Calu3 (cell line): ENCODE measurements at regions of chr2 and their contacts with region 1.

Region 1: GRCh38 chr2:156892467-156893281 is 364.8 kb upstream of the GALNT5 start:
- DNase-seq: peak; percentile 23
- H3K4me3 Mint-ChIP-seq: peak overlapping the region; percentile 67
- H3K27ac Mint-ChIP-seq: peak overlapping the region; percentile 29
- H3K4me1 Mint-ChIP-seq: peaks cover 20% of the 10 kb centered on the region
- H3K27me3 Mint-ChIP-seq: no peaks in the 10 kb centered on the region
- CTCF ChIP-seq: peak; percentile 18

Region 2: DNA sequence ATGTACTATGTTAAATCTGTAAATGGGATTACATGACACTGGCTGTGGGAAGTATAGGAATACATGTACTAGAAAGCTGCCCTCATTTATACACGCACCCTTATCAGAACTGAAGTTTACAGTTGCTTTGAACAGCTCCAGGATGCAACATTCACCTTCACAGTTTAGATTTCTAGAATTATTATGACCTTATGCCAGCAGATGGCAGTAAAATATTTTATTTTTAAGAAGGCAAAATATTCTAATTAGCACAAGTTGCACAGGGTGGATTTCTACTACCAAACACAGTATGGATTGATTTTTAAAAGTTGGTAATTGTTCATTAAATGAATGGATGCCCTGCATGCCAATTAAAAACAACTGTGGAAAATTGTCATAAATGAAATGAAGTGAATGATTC is 1523.7 kb before region 1 on chr2:
- CTCF ChIA-PET with region 1: no interaction called
- intact Hi-C with region 1: loop called (anchors 5 kb)
- DNase-seq: no peak
- H3K4me3 Mint-ChIP-seq: no peak overlapping the region
- H3K27ac Mint-ChIP-seq: no peak overlapping the region
- H3K4me1 Mint-ChIP-seq: no peaks in the 10 kb centered on the region
- H3K27me3 Mint-ChIP-seq: no peaks in the 10 kb centered on the region
- CTCF ChIP-seq: no peak

Region 3: GRCh38 chr2:156065905-156066304 is 826.8 kb before region 1 on chr2:
- CTCF ChIA-PET with region 1: no interaction called
- intact Hi-C with region 1: loop called (anchors 5 kb)
- DNase-seq: peak; percentile 58
- H3K4me3 Mint-ChIP-seq: no peak overlapping the region
- H3K27ac Mint-ChIP-seq: no peak overlapping the region
- H3K4me1 Mint-ChIP-seq: no peaks in the 10 kb centered on the region
- H3K27me3 Mint-ChIP-seq: no peaks in the 10 kb centered on the region
- CTCF ChIP-seq: peak; percentile 36